ENCODE measurements at regions of chr15 and their contacts with region 1.

Region 1: DNA sequence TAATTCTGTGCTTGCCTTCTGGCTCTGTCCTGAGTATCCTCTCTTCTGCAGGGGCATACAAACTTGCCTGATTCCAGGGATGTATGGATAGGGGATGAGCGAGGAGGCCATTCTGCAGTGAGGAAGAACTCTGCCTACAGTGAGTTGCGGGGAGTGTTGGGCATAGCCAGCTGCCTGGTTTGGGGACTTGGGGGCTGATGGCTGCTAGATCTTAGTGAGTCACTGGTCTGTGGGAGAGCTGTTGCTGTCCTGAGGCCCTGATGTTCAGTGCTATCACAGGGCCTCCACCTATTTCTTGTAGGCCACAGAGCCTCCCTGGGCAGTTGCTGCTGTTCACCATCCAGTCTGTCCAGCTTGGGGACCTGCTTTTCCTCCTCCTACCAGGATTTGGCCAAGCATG is 20.3 kb downstream of the CDAN1 start:
- DNase-seq: no peak
- H3K4me3 ChIP-seq: no peak overlapping the region
- H3K27me3 ChIP-seq: no peaks in the 10 kb centered on the region
- CTCF ChIP-seq: no peak

Region 2: DNA sequence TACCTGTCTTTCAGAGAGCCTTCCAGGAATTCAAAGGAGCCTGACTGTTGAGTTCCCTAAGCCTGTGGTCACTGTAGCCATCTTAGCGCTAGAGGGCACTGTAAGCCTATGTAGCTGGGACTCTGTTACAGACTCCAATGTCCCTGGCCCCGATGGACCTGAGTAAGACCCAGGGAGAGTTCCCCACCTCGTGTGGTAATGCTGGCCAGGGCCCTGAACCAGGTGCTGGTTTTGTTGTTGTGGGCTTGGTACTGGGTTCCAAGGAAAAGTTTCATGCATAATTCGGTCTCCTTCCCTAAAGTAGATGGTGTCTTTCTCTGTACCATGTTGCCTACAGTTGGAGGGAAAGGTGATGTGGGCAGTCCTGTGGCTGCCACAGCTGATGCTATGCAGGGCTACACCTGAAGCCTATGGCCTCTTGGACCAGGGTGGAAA is 12.1 kb before region 1 on chr15:
- CTCF ChIA-PET with region 1: interaction called, 16 read pairs
- POLR2A ChIA-PET with region 1: no interaction called
- DNase-seq: no peak
- H3K4me3 ChIP-seq: no peak overlapping the region
- H3K27me3 ChIP-seq: no peaks in the 10 kb centered on the region
- CTCF ChIP-seq: peak; percentile 91

Region 3: DNA sequence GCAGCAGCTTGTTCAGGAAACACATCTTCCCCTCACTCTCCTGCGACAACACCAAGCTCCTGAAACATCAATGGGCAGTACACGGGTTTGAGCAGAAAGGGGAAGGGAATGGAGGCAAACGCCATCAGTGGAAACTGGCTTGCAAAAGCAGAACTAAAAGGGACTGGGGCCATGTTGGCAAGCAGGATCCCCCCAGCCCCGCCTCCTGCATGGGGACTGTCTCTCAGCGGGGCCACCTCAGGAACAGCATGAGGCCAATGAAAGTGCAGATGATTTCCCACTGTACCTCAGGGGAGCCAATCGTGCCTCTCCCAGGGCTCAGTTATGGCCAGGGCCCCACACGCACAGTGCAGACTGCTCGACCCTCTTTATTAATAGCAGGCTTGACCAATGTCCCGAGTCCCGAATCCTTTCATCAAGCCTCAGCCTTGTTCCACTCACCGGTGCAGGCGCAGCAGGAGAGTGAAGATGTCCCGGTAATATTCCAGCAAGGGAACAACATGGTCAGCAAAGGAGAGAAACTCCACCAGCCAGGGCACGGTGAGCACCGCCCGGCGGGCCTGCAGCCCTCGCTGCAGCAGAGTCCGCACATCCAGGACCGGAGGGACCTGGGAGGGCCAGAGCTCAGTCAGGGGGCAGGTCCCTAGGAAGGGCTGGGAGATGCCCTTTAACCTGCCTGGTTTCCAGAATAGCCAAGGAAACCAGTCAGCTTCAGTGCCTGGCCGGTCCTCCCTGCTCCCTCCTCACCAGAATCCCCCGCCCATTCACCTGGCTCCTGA is 13.7 kb after region 1 on chr15:
- CTCF ChIA-PET with region 1: no interaction called
- POLR2A ChIA-PET with region 1: no interaction called
- DNase-seq: no peak
- H3K4me3 ChIP-seq: no peak overlapping the region
- H3K27me3 ChIP-seq: no peaks in the 10 kb centered on the region
- CTCF ChIP-seq: no peak

Measured in BJ (cell line).